Activated CD4-positive, alpha-beta memory T cell treated with anti-CD3 and anti-CD28 coated beads, Interleukin-2, amount 10 ng/mL, durations not matched to agents 7 days and 5 days (primary cell): ENCODE measurements at regions of chr20 and their contacts with region 1.

Region 1: GRCh38 chr20:49915378-49916145 is at the start of gene SPATA2:
- DNase-seq: peak; percentile 93
- H3K4me3 Mint-ChIP-seq: peak within 1 kb of the TSS; percentile 99
- H3K27ac Mint-ChIP-seq: peak within 1 kb of the TSS; percentile 100
- H3K4me1 Mint-ChIP-seq: peaks cover 38% of the 10 kb centered on the region
- H3K27me3 Mint-ChIP-seq: no peaks in the 10 kb centered on the region
- total RNA-seq, gene SPATA2: 8.4 to 9.0 TPM

Region 2: GRCh38 chr20:49794336-49795138 is 121.0 kb before region 1 on chr20:
- CTCF ChIA-PET with region 1: no interaction called
- POLR2A ChIA-PET with region 1: no interaction called
- DNase-seq: peak; percentile 40
- H3K4me3 Mint-ChIP-seq: no peak overlapping the region
- H3K27ac Mint-ChIP-seq: peak overlapping the region; percentile 28
- H3K4me1 Mint-ChIP-seq: peaks cover 20% of the 10 kb centered on the region
- H3K27me3 Mint-ChIP-seq: peaks cover 20% of the 10 kb centered on the region

Region 3: DNA sequence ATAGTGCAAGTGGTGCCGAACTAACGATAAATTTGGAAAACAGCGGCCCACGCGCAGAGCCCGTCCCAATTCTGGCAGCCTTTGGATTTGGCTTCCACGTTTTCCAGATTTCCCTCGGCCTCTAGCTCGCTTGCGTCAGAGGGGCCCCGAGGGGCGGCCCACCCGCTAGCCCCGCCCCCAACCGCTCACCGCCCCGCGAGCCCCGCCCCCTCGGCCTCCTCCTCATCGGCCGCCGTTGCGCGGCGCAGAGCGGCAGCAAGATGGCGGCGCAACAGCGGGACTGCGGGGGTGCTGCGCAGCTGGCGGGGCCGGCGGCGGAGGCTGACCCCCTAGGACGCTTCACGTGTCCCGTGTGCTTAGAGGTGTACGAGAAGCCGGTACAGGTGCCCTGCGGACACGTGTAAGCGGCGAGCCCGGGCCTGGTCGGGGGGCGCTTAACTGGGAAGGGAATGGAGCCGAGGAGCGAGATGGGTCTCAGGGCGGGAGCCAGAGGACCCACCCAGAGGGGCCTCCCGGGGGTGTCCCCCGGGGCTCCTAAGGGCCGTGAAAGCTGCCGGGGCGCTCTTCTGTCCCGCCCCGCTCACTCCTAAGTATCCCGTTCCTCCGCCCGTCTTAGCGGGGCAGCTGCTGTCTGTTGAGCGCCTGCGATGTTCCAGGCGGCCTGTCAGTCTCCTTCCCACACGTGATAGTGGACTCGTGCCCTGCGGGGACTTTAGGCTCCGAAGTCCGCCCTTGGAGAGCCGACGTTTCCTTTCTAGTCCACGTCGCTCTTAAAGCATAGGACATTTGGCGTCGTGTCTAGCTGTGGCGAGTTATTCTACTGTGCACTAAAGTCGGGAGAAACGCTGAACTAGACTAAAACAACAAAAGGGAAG is 20.8 kb after region 1 on chr20 and contains the start of gene RNF114:
- CTCF ChIA-PET with region 1: interaction called, 4 read pairs
- POLR2A ChIA-PET with region 1: interaction called, 26 read pairs
- DNase-seq: peak; percentile 92
- H3K4me3 Mint-ChIP-seq: peak within 1 kb of the TSS; percentile 91
- H3K27ac Mint-ChIP-seq: peak within 1 kb of the TSS; percentile 91
- H3K4me1 Mint-ChIP-seq: peaks cover 52% of the 10 kb centered on the region
- H3K27me3 Mint-ChIP-seq: no peaks in the 10 kb centered on the region
- total RNA-seq, gene RNF114: 66.4 to 76.4 TPM